ENCODE measurements at regions of chr4 and their contacts with region 1.

Region 1: DNA sequence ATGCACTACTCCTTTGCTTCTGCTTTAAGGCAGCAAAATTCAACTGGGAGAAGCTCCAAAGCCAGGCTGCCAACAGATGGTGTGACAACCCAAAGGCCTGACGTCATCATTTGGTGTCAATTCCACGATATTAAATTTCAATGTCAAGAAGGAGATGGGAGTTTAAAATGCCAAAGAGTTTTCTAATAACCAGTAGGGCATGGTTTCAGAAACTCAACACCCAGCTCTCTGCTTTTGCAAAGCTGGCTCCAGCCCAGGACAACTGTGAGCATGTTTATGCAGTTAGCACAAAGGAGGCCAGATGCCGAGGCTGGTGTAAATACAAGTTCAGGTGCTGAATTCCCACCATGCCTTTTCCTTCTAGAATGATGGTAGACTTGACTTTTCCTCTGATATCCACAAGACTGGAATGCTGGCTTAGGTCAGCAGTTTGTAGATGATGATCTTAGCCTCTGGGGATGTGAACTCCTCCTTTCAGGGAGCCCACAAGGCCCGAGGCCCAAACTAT is 67.3 kb downstream of the AFAP1 start:
- DNase-seq: peak; percentile 28 to 62 (median 53)
- H3K4me3 ChIP-seq: no peak overlapping the region
- H3K27ac ChIP-seq: no peak overlapping the region
- H3K4me1 ChIP-seq: peaks cover 15% of the 10 kb centered on the region
- H3K27me3 ChIP-seq: no peaks in the 10 kb centered on the region
- CTCF ChIP-seq: no peak
- EP300 ChIP-seq: no peak
- POLR2A ChIP-seq: no peak

Region 2: DNA sequence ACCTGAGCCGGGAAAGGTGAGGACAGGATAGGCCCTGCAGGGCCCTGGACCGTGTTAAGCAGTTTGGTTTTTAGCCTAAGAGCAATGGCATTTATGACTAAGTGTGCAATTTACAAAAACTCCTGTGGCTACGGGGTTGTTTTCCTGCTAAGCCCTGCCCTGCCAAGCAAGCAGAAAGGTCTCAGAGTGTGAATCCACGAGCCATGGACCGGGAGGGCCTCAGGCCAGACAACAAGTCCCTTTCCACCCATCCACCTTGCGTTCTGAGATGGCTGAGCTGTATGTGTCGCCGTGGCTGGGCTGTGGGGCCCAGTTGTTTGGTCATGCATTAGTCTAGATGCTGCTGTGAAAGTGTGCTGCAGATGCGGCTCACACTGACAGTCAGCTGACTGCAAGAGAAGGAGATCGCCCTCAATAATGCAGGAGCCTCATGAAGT is 101.2 kb after region 1 on chr4:
- intact Hi-C with region 1: loop called in 1 of 4 experiments (anchors 5 kb)
- DNase-seq: no peak
- H3K4me3 ChIP-seq: no peak overlapping the region
- H3K27ac ChIP-seq: no peak overlapping the region
- H3K4me1 ChIP-seq: peaks cover 11% of the 10 kb centered on the region
- H3K27me3 ChIP-seq: no peaks in the 10 kb centered on the region
- CTCF ChIP-seq: no peak
- EP300 ChIP-seq: no peak
- POLR2A ChIP-seq: no peak

Region 3: GRCh38 chr4:8035371-8035780 is 163.1 kb after region 1 on chr4:
- intact Hi-C with region 1: no loop called
- DNase-seq: no peak
- H3K4me3 ChIP-seq: no peak overlapping the region
- H3K27ac ChIP-seq: no peak overlapping the region
- H3K4me1 ChIP-seq: no peaks in the 10 kb centered on the region
- H3K27me3 ChIP-seq: no peaks in the 10 kb centered on the region
- CTCF ChIP-seq: no peak
- EP300 ChIP-seq: no peak
- POLR2A ChIP-seq: no peak